ENCODE measurements at regions of chr6 and their contacts with region 1.

Region 1: GRCh38 chr6:111642463-111643158 is 36.9 kb upstream of the TRAF3IP2 start:
- DNase-seq: peak; percentile 67
- ATAC-seq: peak; percentile 92
- H3K4me3 ChIP-seq: no peak overlapping the region
- H3K27ac ChIP-seq: no peak overlapping the region
- H3K4me1 ChIP-seq: peaks cover 4% of the 10 kb centered on the region
- H3K27me3 ChIP-seq: no peaks in the 10 kb centered on the region
- CTCF ChIP-seq: peak; percentile 92

Region 2: DNA sequence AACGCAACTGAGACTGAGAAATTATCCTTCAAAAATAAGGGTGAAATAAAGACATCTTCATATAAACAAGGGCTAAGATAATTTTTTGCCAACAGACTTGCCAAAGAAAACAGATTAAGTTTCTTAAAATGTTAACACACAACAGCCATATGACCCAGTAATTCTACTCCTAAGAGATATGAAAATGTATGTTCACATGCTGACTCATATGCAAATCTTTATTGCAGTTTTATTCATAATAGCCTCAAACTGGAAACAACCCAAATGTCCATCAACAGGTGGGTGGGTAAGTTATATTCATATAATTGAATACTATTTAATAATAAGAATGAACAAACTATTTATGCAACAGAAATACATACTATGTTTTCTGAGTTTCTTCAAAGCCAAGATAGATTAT is 299.7 kb before region 1 on chr6:
- CTCF ChIA-PET with region 1: interaction called, 11 read pairs
- POLR2A ChIA-PET with region 1: no interaction called
- in situ Hi-C with region 1: no loop called
- intact Hi-C with region 1: no loop called
- DNase-seq: no peak
- ATAC-seq: no peak
- H3K4me3 ChIP-seq: no peak overlapping the region
- H3K27ac ChIP-seq: no peak overlapping the region
- H3K4me1 ChIP-seq: no peaks in the 10 kb centered on the region
- H3K27me3 ChIP-seq: no peaks in the 10 kb centered on the region
- CTCF ChIP-seq: no peak

Region 3: GRCh38 chr6:111353912-111354462 is 288.6 kb before region 1 on chr6:
- CTCF ChIA-PET with region 1: no interaction called
- POLR2A ChIA-PET with region 1: no interaction called
- in situ Hi-C with region 1: no loop called
- intact Hi-C with region 1: loop called (anchors 10 kb)
- DNase-seq: no peak
- ATAC-seq: no peak
- H3K4me3 ChIP-seq: no peak overlapping the region
- H3K27ac ChIP-seq: no peak overlapping the region
- H3K4me1 ChIP-seq: no peaks in the 10 kb centered on the region
- H3K27me3 ChIP-seq: no peaks in the 10 kb centered on the region
- CTCF ChIP-seq: no peak

Region 4: DNA sequence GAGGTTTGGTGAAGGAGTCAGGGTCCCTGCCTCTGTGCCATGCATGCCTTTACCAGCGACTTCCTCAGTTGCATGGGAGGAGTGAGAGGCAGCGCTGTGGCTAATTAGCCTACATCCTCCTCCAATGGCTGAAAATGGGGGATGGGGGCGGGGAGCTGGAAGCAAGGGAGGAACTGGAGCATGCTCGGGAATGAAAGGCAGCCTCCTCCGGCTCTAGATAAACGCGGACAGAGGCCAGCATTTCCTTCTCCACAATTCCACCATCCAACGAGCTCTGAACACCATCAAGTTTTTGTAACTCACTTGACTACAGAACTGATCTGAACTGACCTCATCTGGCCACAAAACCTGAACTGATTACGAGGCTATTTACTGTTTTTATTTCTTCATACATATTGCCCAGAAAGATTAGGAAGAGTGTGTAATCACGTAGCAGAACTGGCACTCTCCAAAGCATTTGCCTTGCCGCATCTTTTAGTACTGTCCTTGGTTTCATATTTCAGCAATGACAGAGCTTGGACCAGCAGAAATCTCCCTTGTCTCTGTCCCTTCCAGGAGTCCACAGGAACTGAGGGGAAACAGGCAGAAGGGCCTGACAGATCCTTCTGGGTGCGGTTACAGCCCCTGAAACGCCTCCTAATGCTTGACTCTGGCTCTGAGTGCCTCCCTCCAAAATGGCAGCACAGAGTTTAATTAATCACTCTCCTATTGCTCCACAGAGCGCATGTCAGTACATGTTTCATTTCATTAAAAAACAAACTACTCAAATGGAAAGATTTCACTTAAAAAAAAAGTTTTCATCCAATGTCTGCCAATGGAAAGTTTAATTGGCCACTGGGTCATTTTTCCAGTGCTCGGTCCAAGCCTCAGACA is 21.3 kb after region 1 on chr6:
- CTCF ChIA-PET with region 1: interaction called, 15 read pairs
- POLR2A ChIA-PET with region 1: no interaction called
- in situ Hi-C with region 1: no loop called
- intact Hi-C with region 1: no loop called
- DNase-seq: no peak
- ATAC-seq: no peak
- H3K4me3 ChIP-seq: no peak overlapping the region
- H3K27ac ChIP-seq: no peak overlapping the region
- H3K4me1 ChIP-seq: peaks cover 14% of the 10 kb centered on the region
- H3K27me3 ChIP-seq: no peaks in the 10 kb centered on the region
- CTCF ChIP-seq: no peak

Region 5: GRCh38 chr6:111727802-111728201 is 85.2 kb after region 1 on chr6:
- CTCF ChIA-PET with region 1: no interaction called
- POLR2A ChIA-PET with region 1: no interaction called
- in situ Hi-C with region 1: no loop called
- intact Hi-C with region 1: no loop called
- DNase-seq: no peak
- ATAC-seq: no peak
- H3K4me3 ChIP-seq: no peak overlapping the region
- H3K27ac ChIP-seq: no peak overlapping the region
- H3K4me1 ChIP-seq: no peaks in the 10 kb centered on the region
- H3K27me3 ChIP-seq: peaks cover 21% of the 10 kb centered on the region
- CTCF ChIP-seq: peak; percentile 44